ENCODE measurements at regions of chr15 and their contacts with region 1.

Region 1: GRCh38 chr15:25416693-25417092 is 22.1 kb downstream of the UBE3A start:
- DNase-seq: no peak
- H3K4me3 ChIP-seq: no peak overlapping the region
- H3K27ac ChIP-seq: no peak overlapping the region
- H3K4me1 ChIP-seq: peaks cover 0 to 35% (median 5%) of the 10 kb centered on the region in 4 donors
- H3K27me3 ChIP-seq: no peaks in the 10 kb centered on the region
- CTCF ChIP-seq: no peak
- EP300 ChIP-seq: no peak
- POLR2A ChIP-seq: no peak

Region 2: DNA sequence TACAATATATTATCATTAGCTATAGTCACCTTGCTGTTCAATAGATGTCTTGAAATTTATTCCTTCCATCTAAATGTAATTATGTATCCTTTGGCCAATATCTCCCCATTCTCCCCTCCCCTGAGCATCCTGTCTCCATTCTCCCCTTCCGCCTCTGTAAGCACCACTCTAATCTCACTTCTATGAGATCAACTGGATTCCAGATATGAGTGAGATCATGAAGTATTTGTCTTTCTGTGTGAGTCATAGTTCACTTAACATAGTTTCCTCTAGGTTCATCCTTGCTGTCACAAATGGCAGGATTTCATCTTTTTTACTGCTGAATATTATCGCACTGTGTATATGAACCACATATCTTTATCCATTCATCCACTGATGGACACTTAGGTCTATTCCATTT is 1580.7 kb before region 1 on chr15:
- in situ Hi-C with region 1: no loop called
- intact Hi-C with region 1: no loop called
- DNase-seq: no peak
- H3K4me3 ChIP-seq: no peak overlapping the region
- H3K27ac ChIP-seq: no peak overlapping the region
- H3K4me1 ChIP-seq: no peaks in the 10 kb centered on the region
- H3K27me3 ChIP-seq: no peaks in the 10 kb centered on the region
- CTCF ChIP-seq: no peak
- EP300 ChIP-seq: no peak
- POLR2A ChIP-seq: no peak

Region 3: DNA sequence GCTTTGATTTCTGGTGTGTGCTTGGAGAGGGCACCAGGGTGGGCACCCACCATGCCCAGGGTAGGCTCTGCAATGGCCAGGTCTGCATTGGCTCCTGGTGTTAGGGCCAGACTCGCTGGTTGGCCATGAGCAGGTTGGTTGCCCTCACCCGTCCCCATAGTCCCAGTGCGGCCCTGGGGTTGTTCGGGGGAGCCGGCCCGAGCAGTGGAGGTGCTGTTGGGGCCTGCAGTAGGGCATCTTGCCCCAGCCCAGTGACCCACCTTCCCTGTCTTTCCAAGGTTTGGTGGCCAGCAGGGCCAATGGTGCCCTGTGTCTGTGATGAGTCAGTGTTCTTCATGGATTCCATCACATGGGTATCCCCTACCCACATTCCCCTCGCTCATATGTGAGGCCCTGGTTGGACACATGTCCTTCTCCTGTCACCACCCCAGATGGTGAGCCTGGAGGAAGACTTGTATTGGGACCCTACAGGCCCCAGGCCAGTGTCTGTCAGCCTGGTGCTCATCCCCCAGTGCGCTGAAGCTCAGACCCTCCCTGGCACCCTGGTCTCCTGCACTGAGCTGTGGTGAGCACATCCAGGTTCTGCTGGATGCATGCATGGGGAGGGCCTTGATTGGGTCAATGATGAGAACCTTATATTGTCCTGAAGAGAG is 168.0 kb before region 1 on chr15:
- in situ Hi-C with region 1: no loop called
- intact Hi-C with region 1: no loop called
- DNase-seq: peak; percentile 2
- H3K4me3 ChIP-seq: no peak overlapping the region
- H3K27ac ChIP-seq: no peak overlapping the region
- H3K4me1 ChIP-seq: no peaks in the 10 kb centered on the region
- H3K27me3 ChIP-seq: no peaks in the 10 kb centered on the region
- CTCF ChIP-seq: no peak
- EP300 ChIP-seq: no peak
- POLR2A ChIP-seq: no peak

Region 4: DNA sequence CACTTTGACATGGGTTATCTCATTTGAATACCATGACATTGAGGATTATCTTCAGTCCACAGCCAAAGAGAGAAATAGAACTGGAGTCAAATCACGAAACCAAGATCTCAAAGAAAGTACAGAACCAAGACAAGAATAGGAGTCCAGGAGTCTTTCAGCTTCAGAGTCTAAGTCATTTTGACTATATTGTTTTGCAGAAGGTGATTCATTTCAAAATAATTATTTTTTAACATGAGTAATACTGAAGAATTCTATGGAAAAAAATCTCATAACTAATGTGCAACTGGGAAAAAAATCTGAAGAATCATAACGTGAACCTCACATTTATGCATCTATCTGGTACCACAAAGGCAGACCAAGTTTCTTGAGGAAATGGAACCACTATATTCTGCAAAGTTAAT is 38.2 kb before region 1 on chr15:
- in situ Hi-C with region 1: loop called in 1 of 4 experiments (anchors 5 kb)
- intact Hi-C with region 1: no loop called
- DNase-seq: no peak
- H3K4me3 ChIP-seq: no peak overlapping the region
- H3K27ac ChIP-seq: no peak overlapping the region
- H3K4me1 ChIP-seq: peaks cover 0 to 8% (median 0%) of the 10 kb centered on the region in 4 donors
- H3K27me3 ChIP-seq: no peaks in the 10 kb centered on the region
- CTCF ChIP-seq: no peak
- EP300 ChIP-seq: no peak
- POLR2A ChIP-seq: no peak

Region 5: GRCh38 chr15:25481207-25481859 is 64.6 kb after region 1 on chr15:
- in situ Hi-C with region 1: no loop called
- intact Hi-C with region 1: no loop called
- DNase-seq: peak; percentile 8
- H3K4me3 ChIP-seq: peak overlapping the region in 1 of 4 donors; percentile 2
- H3K27ac ChIP-seq: no peak overlapping the region
- H3K4me1 ChIP-seq: peaks cover 0 to 4% (median 0%) of the 10 kb centered on the region in 4 donors
- H3K27me3 ChIP-seq: no peaks in the 10 kb centered on the region
- CTCF ChIP-seq: no peak
- EP300 ChIP-seq: no peak
- POLR2A ChIP-seq: no peak

Region 6: DNA sequence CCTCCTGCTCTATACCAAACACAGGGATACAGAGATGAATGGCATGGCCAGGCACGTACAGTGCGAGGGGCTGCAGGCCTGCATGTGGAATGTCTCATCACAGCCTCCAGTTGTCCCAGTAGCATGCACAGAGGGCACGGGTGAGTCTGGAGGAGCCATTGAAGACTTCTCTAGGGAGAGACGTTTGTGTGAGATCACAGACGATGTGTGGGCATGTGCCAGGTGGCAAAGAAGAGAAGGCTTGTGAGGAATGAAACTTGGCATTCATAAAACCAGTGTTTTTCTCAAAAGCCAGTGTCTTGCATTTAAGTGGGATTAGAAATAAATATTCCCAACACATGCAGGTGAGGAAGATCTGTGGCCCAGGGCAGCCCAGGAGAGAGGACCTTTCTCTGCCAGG is 141.2 kb after region 1 on chr15:
- in situ Hi-C with region 1: no loop called
- intact Hi-C with region 1: no loop called
- DNase-seq: no peak
- H3K4me3 ChIP-seq: no peak overlapping the region
- H3K27ac ChIP-seq: no peak overlapping the region
- H3K4me1 ChIP-seq: no peaks in the 10 kb centered on the region
- H3K27me3 ChIP-seq: no peaks in the 10 kb centered on the region
- CTCF ChIP-seq: no peak
- EP300 ChIP-seq: no peak
- POLR2A ChIP-seq: no peak